RWPE1 (cell line): ENCODE measurements at regions of chr7 and their contacts with region 1.

Region 1: GRCh38 chr7:24819916-24820689 is 62.8 kb upstream of the GSDME start:
- DNase-seq: peak; percentile 80
- H3K27ac ChIP-seq: peak overlapping the region; percentile 83
- CTCF ChIP-seq: peak; percentile 95

Region 2: GRCh38 chr7:25093268-25093826 is 273.2 kb after region 1 on chr7:
- CTCF ChIA-PET with region 1: interaction called, 17 read pairs
- POLR2A ChIA-PET with region 1: no interaction called
- DNase-seq: peak; percentile 77
- H3K27ac ChIP-seq: peak overlapping the region; percentile 42
- CTCF ChIP-seq: peak; percentile 89